PC-3 (cell line): ENCODE measurements at regions of chr16 and their contacts with region 1.

Region 1: DNA sequence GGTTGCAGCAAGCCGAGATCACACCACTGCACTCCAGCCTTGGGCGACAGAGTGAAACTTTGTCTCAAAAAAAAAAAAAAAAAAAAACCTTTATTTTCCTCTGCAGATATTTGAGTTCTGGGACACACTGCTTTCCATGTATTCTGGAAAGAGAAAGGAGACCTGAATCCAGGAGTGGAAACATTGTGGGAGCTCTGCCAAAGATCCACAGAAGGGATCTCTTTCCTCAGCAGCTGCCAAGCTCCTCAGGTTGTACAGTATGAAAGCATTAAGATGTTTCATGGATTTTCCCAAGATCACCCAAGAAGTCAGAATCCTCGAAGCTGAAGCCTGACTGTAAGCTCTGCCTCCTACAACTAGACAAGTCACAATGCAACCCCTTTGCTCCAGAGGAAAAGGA is 13.5 kb downstream of the NPRL3 start:
- DNase-seq: no peak
- ATAC-seq: no peak
- H3K4me3 ChIP-seq: no peak overlapping the region
- H3K27ac ChIP-seq: no peak overlapping the region
- H3K4me1 ChIP-seq: no peaks in the 10 kb centered on the region
- H3K27me3 ChIP-seq: no peaks in the 10 kb centered on the region
- CTCF ChIP-seq: no peak

Region 2: DNA sequence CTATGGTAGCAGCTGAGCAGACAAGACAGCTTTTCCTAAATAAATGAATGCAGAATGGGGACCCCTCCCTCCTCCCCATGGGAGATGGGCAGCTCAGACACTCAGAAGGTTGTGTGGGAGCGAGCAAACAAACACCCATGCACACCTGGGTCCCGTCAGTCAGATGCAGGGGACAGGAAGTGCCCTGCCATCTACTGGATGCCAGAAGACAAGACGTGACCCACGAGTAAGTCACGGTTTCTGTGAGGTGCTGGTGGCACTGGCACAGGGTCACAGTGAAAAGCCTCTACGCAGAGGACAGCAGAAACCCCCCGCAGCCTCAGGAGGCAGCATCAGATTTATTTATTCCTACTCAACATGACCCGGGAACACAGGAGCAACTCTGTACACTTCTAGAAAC is 63.7 kb after region 1 on chr16:
- CTCF ChIA-PET with region 1: no interaction called
- POLR2A ChIA-PET with region 1: no interaction called
- intact Hi-C with region 1: no loop called
- DNase-seq: peak; percentile 9
- ATAC-seq: peak; percentile 42; the same call in 1 of the 2 replicates
- H3K4me3 ChIP-seq: no peak overlapping the region
- H3K27ac ChIP-seq: no peak overlapping the region
- H3K4me1 ChIP-seq: no peaks in the 10 kb centered on the region
- H3K27me3 ChIP-seq: no peaks in the 10 kb centered on the region
- CTCF ChIP-seq: peak; percentile 44; the same call in 1 of the 2 replicates

Region 3: DNA sequence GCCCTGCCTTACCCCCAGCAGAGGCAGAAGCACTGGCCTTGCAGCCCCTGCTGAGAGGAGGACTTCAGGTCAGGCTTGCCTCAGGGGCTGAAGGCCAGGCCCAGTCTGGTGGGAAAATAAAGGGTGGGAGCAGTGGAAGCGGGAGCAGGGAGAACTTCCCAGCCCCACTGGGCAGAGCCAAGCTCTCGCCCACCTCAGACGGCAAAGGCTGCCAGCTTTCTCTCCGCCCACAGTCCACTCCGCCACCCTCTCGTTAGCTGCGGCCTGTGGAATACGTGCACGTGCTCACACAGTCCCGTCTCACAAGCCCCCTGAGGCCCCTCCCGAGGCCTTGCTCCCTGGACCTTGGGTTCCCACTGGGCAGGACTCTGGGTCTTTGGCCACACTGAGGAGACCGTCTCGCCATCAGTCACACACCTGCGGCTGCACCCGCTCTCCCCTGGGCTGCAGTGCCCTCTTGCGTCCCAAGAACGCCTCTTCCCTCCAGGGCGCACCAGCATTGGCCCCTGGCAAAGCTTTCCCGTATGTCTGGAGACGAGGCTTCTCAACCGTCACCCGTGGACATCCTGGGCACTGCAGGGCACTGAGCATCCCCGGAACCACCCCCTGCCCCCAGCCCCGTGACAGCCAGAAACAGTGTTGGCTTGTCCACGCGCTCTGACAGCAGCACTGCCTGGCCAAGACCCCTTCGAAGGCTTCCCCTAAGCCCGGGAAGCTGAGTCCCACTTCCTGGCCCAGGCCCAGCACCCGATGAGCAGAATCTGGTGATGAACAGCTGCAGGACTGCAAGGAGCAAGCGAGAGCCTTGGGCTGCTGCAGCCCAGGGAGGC is 237.1 kb after region 1 on chr16:
- CTCF ChIA-PET with region 1: interaction called, 10 read pairs
- POLR2A ChIA-PET with region 1: no interaction called
- intact Hi-C with region 1: no loop called
- DNase-seq: peak; percentile 86
- ATAC-seq: peak; percentile 92
- H3K4me3 ChIP-seq: peak overlapping the region; percentile 27; the same call in 1 of the 2 replicates
- H3K27ac ChIP-seq: no peak overlapping the region
- H3K4me1 ChIP-seq: peaks cover 2% of the 10 kb centered on the region; the same call in 1 of the 2 replicates
- H3K27me3 ChIP-seq: no peaks in the 10 kb centered on the region
- CTCF ChIP-seq: peak; percentile 75